ENCODE measurements at regions of chr11 and their contacts with region 1.

Region 1: GRCh38 chr11:122310756-122311155 is 194.7 kb upstream of the BLID start:
- DNase-seq: no peak
- ATAC-seq: no peak
- H3K4me3 ChIP-seq: no peak overlapping the region
- H3K27ac ChIP-seq: no peak overlapping the region
- H3K4me1 ChIP-seq: peaks cover 5% of the 10 kb centered on the region; the same call in 1 of the 2 replicates
- H3K27me3 ChIP-seq: no peaks in the 10 kb centered on the region; the same call in 1 of the 2 replicates
- CTCF ChIP-seq: no peak
- POLR2A ChIP-seq: no peak
- RAD21 ChIP-seq: no peak

Region 2: DNA sequence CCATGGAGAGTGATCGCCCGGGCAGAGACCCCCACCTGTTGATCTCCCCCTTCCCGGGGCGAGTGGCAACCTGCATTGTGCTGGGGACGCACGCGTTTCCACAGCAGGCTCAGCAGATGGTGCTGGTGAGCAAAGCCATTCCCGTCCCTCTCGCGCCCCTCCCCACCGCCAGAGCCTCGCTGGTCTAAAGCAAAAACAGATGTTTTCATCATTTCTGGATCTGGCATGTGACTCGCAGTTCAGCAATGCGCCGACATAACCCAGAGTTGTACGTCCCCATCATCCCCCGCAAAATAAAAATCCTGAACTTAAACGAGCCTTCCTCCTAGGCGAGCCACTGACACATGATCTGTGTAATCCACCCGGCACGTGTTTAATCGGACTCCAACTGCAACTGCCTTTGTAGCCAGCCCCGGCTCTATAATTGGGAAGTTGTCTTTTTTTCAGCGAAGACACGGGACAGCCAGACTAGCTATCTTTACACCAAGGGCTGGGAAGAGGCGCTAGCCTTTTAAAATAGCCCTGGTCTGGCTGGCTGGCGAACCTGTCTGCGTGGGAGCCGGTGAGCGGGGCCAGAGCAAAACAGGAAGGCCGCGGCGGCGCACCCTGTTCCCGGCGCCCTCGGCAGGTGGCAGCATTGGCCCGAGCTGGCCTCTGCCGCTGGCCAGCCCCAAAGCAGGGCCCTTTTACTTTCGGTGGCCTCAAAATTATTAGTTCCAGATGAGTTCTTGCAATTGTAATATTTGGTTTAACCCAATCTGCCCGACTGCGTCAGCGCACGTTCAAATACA is 655.0 kb before region 1 on chr11:
- CTCF ChIA-PET with region 1: no interaction called
- POLR2A ChIA-PET with region 1: no interaction called
- dilution Hi-C with region 1: no loop called
- in situ Hi-C with region 1: no loop called
- intact Hi-C with region 1: no loop called
- DNase-seq: peak; percentile 99
- ATAC-seq: peak; percentile 88
- H3K4me3 ChIP-seq: peak overlapping the region; percentile 28
- H3K27ac ChIP-seq: peak overlapping the region; percentile 97
- H3K4me1 ChIP-seq: peaks cover 28% of the 10 kb centered on the region
- H3K27me3 ChIP-seq: no peaks in the 10 kb centered on the region
- CTCF ChIP-seq: peak; percentile 97
- POLR2A ChIP-seq: peak; percentile 64; the same call in 1 of the 2 replicates
- RAD21 ChIP-seq: peak; percentile 99

Region 3: DNA sequence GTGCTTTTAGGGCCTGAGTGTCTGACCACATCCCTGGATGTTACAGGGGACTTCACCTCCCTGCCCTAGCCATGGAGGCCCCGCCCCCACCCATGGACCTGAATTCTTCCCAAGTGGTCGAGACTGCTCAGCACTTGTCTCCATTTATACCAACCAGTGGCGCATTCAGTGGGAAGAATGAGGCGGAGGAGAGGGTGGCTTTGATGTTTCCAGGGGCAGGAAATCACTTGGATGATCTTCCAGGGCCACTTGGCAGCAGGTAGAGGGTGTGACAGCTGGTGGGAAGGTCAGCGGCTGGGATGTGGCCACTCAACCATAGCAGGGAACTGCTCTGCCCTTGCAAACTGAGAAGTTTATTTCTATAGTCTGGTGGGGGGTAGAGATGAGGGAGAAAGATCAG is 39.6 kb before region 1 on chr11:
- CTCF ChIA-PET with region 1: no interaction called
- POLR2A ChIA-PET with region 1: no interaction called
- dilution Hi-C with region 1: no loop called
- in situ Hi-C with region 1: no loop called
- intact Hi-C with region 1: loop called (anchors 5 kb)
- DNase-seq: no peak
- ATAC-seq: no peak
- H3K4me3 ChIP-seq: no peak overlapping the region
- H3K27ac ChIP-seq: no peak overlapping the region
- H3K4me1 ChIP-seq: peaks cover 4% of the 10 kb centered on the region; the same call in 1 of the 2 replicates
- H3K27me3 ChIP-seq: no peaks in the 10 kb centered on the region
- CTCF ChIP-seq: no peak
- POLR2A ChIP-seq: no peak
- RAD21 ChIP-seq: no peak

Measured in IMR-90 (cell line).